ENCODE measurements at regions of chr18 and their contacts with region 1.

Region 1: DNA sequence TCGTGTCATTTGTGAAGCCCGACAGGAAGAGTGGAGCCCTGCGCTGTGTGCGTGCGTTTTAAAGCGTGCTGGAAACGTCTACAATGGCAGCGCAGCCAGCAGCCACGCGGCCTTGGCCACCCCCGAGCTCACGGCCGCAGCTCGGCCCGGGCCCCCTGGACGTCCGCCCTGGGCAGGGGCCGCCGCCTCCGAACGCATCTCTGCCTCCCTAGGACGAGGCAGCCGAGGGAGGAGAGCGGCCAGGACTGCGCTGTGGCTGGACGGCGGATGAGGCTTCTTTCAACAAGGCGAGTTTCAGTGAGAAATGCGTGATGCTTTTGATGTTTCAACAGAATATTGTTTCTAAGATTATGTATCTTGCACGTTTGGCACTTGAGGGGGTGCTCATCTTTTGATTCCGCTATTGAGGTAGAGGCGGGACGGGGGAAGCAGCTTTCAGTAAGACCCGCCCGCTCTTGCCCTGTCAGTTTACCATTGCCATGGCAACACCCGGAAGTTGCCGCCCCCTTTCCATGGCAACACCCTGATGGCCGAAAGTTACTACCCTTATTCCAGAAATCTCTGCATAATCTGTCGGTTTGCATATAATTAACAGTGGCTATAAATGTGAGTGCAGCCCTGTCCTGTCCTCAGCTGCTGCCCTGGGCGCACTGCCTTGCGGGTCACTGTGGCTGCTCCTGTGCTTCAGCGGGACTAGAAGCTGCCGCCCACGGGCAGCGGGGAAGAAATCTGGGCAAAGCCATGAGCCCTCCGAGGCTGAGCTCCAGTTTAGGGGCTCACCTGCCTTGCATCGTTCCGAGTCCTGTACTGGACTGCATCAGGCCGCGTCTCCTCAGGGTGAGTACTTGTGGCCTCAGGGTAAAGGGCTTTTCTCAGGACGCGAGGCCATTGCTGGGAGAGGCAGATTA is 38.6 kb downstream of the ADNP2 start:
- DNase-seq: peak; percentile 88
- H3K4me3 Mint-ChIP-seq: peak overlapping the region; percentile 82
- H3K27ac Mint-ChIP-seq: peak overlapping the region; percentile 49
- H3K4me1 Mint-ChIP-seq: peaks cover 7% of the 10 kb centered on the region
- H3K27me3 Mint-ChIP-seq: peaks cover 22% of the 10 kb centered on the region

Region 2: DNA sequence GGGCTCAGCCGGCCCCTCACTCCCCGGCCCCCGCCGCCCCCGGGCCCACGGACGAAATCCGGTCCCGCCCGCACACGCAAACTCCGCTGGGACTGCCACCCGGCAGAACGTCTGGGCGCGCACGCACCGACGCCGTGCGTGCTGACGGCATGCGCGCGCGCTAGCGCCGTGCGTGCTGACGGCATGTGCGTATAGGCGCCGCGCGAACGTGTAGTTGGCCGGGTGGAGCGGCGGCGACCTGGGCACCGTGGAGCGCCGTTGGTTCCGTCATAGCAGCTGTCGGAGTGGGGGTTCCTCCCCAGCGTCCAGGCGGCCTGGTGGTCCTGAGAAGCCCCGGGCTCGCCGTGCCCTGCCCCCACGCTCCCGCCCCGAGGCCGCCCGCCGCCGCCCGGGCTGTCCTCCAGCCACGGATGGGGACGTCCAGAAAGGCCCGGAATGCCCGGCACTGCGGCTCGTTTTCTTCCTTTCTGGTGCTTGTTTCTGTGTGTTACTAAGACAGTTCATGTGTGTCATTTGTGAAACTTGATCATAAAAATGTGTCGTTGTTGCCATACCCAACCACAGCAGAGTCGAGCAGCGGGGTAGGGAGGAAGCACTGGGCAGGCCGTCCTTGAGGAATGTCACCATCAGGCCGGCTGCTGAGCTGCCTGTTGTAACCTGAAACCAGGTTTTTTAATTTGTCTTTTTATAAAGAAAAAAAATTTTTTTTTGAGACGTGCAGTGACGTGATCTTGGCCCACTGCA is 159.0 kb before region 1 on chr18 and contains the start of gene TXNL4A:
- CTCF ChIA-PET with region 1: no interaction called
- POLR2A ChIA-PET with region 1: no interaction called
- intact Hi-C with region 1: loop called (anchors 2 kb)
- DNase-seq: peak; percentile 90
- H3K4me3 Mint-ChIP-seq: peak within 1 kb of the TSS; percentile 94
- H3K27ac Mint-ChIP-seq: peak within 1 kb of the TSS; percentile 92
- H3K4me1 Mint-ChIP-seq: peaks cover 30% of the 10 kb centered on the region
- H3K27me3 Mint-ChIP-seq: no peaks in the 10 kb centered on the region
- total RNA-seq, gene TXNL4A: 169 to 175 TPM

Region 3: DNA sequence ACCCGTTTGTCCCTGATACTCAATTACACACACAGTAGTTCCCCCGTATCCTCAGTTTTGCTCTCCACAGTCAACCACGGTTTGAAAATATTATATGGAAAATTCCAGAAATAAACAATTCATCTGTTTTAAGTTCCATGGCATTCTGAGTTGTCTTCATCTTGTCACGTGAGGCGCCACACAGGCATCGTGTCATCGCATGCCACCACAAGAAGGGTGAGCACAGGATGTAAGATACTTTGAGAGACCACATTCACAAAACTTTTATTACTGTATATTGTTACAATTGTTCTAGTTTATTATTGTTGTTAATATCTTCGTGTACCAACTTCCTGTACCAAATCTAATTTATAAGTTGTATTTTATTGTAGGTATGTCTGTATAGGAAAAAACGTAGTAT is 20.9 kb before region 1 on chr18:
- CTCF ChIA-PET with region 1: no interaction called
- POLR2A ChIA-PET with region 1: no interaction called
- intact Hi-C with region 1: no loop called
- DNase-seq: no peak
- H3K4me3 Mint-ChIP-seq: no peak overlapping the region
- H3K27ac Mint-ChIP-seq: no peak overlapping the region
- H3K4me1 Mint-ChIP-seq: peaks cover 47% of the 10 kb centered on the region
- H3K27me3 Mint-ChIP-seq: no peaks in the 10 kb centered on the region

Measured in activated CD4-positive, alpha-beta memory T cell treated with anti-CD3 and anti-CD28 coated beads for 36 hours (primary cell).